Naive thymus-derived CD4-positive, alpha-beta T cell (primary cell): ENCODE measurements at regions of chr15 and their contacts with region 1.

Region 1: DNA sequence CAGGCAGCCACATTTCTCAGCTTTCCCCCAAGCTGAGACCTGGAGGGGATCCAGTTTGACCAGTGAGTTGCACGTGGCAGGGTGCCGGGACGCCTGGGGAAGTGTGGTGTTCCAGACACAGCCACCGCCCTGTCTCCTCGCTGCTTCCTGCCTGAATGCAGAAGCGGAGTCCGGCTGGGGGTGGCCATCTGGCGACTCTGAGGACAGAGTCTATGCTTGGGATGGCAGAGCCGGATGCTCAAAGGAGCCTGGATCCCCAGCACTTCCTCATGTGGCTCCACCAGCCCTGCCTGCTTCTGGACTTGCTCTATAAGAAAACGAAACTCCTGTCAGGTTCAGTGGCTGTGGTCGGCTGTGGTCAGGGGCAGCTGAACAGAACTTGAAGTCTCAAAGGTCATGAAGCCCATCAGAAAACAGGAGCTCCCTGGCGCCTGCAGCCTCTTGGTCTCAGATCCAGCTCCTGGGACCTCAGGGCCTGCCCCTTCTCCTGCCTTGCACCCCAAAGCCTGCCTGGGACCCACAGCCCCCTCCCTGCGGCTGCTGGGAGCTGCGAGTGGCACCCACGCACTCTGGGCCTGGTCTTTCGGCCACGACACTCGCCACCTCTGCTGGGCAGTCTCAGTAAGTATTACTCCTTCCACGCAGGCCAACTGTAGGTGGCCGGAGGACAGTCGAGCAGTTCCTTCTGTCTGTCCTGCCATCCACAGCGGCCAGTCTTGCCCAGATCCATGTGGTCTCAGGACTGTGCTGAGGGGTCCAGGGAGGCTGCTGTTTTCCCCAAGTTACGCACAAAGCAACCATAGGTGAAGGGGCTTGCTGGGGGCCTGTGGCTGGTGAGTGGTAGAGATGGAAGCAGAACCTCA is 112.8 kb upstream of the MEF2A start:
- DNase-seq: peak in 1 of 9 donors; percentile 19
- ATAC-seq: peak; percentile 75
- H3K4me3 ChIP-seq: no peak overlapping the region
- H3K4me3 Mint-ChIP-seq: peak overlapping the region in 3 of 10 donors; percentile 19 to 53 (median 25)
- H3K27ac ChIP-seq: no peak overlapping the region
- H3K27ac Mint-ChIP-seq: peak overlapping the region in 3 of 9 donors; percentile 18 to 55 (median 36)
- H3K4me1 ChIP-seq: peaks cover 0 to 20% of the 10 kb centered on the region in 2 donors
- H3K4me1 Mint-ChIP-seq: peaks cover 28 to 46% (median 39%) of the 10 kb centered on the region in 7 donors
- H3K27me3 ChIP-seq: no peaks in the 10 kb centered on the region
- H3K27me3 Mint-ChIP-seq: peaks cover 0 to 11% (median 0%) of the 10 kb centered on the region in 5 donors

Region 2: GRCh38 chr15:98405013-98405412 is 1048.0 kb before region 1 on chr15:
- CTCF ChIA-PET with region 1: no interaction called
- POLR2A ChIA-PET with region 1: no interaction called
- intact Hi-C with region 1: no loop called
- DNase-seq: no peak
- ATAC-seq: no peak
- H3K4me3 ChIP-seq: no peak overlapping the region
- H3K4me3 Mint-ChIP-seq: no peak overlapping the region
- H3K27ac ChIP-seq: no peak overlapping the region
- H3K27ac Mint-ChIP-seq: no peak overlapping the region
- H3K4me1 ChIP-seq: no peaks in the 10 kb centered on the region
- H3K4me1 Mint-ChIP-seq: no peaks in the 10 kb centered on the region
- H3K27me3 ChIP-seq: no peaks in the 10 kb centered on the region
- H3K27me3 Mint-ChIP-seq: peaks cover 0 to 40% (median 14%) of the 10 kb centered on the region in 5 donors

Region 3: DNA sequence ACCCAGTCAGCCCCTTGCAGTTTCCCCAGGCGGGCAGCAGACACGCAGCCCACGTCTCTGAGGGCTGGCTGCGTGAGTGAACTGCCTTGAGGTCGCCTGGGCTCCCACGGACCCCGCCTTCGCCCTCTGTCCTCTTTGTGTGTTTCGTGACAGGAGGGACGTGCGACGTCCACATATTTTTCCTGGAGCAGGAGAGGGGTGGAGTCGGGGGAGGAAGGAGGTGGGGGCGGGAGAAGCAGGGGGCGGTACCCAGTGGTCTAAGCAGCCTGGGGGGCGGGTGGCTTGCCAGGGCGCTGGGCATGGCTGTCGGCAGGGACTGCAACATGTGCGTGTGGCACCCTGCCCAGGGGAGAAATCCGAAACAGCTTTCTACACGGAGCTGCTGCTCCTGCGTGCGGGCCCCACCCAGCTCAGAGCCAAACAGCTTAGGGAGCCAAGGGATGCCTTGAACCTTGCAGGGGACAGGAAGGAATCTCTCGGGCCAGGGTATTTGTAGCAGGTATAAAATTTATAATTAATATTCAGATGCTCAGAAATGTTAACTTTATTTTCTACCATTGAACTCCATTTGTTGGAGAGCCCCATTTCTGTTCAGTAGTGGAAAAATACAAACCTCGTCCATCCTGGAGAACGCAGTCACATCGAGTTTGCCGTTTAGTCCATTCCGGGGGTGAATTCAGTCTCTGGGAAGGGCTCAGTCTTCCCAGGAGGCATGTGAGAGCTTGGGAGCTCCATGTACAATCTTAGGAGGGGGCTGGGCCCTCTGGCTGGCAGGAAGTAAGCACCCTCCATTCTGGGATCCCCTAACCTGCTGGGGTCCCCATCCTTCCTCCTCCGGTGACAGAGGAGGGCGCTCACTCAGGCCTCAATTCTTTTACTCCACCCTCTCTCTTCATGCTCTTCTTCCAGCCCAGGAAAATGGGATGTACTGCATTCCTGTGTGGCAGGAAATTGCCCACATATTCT is 33.6 kb after region 1 on chr15:
- CTCF ChIA-PET with region 1: no interaction called
- POLR2A ChIA-PET with region 1: no interaction called
- intact Hi-C with region 1: loop called in 1 of 2 experiments (anchors 5 kb)
- DNase-seq: peak in 1 of 9 donors; percentile 20
- ATAC-seq: peak; percentile 38
- H3K4me3 ChIP-seq: no peak overlapping the region
- H3K4me3 Mint-ChIP-seq: peak overlapping the region; percentile 76 to 92 (median 85)
- H3K27ac ChIP-seq: no peak overlapping the region
- H3K27ac Mint-ChIP-seq: peak overlapping the region in 7 of 9 donors; percentile 63 to 87 (median 76)
- H3K4me1 ChIP-seq: peaks cover 0 to 16% of the 10 kb centered on the region in 2 donors
- H3K4me1 Mint-ChIP-seq: peaks cover 19 to 33% (median 22%) of the 10 kb centered on the region in 7 donors
- H3K27me3 ChIP-seq: peaks cover 0 to 7% of the 10 kb centered on the region in 2 donors
- H3K27me3 Mint-ChIP-seq: peaks cover 0 to 24% (median 5%) of the 10 kb centered on the region in 5 donors